Activated CD8-positive, alpha-beta T cell treated with anti-CD3 and anti-CD28 coated beads for 36 hours (primary cell): ENCODE measurements at regions of chr15 and their contacts with region 1.

Region 1: GRCh38 chr15:31488426-31489204 is 162.0 kb downstream of the KLF13 start:
- DNase-seq: peak; percentile 57
- ATAC-seq: peak; percentile 51
- H3K4me3 Mint-ChIP-seq: no peak overlapping the region
- H3K27ac Mint-ChIP-seq: peak overlapping the region; percentile 77
- H3K4me1 Mint-ChIP-seq: peaks cover 68% of the 10 kb centered on the region
- H3K27me3 Mint-ChIP-seq: no peaks in the 10 kb centered on the region
- CTCF ChIP-seq: peak; percentile 92

Region 2: DNA sequence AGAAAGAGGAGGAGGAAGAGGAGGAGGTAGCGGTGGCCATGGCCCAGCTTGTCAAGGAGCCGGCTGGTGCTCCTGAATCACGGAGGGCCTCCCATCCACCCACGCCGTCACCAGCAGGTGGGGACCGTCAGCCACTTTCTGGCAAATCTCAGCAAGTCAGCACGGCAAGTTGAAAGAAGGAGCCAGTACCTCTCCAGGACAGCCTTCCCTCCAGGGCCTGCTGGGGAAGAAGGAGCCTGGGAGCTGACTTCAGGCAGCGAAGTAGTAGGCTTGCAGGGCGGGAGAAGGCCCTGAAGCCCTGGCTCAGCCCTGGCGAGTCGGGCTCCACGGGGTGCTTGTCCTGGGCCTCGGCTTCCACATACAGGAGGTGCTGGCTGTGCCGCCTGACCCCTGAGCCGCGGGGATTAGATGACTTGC is 287.9 kb before region 1 on chr15:
- CTCF ChIA-PET with region 1: interaction called, 40 read pairs
- POLR2A ChIA-PET with region 1: no interaction called
- intact Hi-C with region 1: loop called (anchors 5 kb)
- DNase-seq: peak; percentile 80
- ATAC-seq: peak; percentile 73
- H3K4me3 Mint-ChIP-seq: no peak overlapping the region
- H3K27ac Mint-ChIP-seq: no peak overlapping the region
- H3K4me1 Mint-ChIP-seq: peaks cover 22% of the 10 kb centered on the region
- H3K27me3 Mint-ChIP-seq: no peaks in the 10 kb centered on the region
- CTCF ChIP-seq: no peak

Region 3: DNA sequence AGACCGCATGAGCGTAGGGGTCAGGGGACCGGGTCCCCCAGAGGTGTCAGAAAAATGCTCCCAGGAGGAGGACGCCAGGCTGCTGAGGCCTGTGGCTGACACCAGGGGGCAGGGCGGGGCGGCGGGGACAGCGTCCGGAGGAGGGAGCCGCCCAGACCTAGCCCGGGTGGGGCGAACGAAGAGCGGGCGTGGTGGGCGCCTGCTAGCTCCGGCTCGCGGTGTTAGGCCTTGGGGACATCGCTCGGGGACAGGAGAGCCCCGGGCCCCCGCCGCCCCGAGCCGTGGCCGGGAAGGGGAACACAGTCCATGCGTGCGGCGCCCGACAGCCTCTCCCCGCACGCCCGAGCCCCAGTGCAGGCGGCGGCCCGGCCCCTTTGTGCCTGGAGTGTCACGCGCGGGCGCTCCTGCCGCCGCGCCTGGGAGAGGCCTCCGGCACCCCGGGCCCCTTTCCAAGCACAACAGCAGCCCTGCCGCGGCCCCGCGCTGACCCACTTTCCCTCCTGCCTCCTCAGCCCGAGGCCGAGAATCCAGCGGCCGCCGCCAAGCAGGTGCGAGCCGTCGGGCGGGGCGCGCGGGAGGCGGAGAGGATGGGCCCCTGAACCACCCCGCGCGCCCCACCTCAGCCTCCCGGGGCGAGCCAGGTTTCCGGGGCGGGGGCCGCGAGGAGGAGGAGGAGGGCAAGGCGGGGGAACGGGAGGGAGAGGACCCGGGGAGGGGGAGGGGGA is 273.0 kb before region 1 on chr15:
- CTCF ChIA-PET with region 1: interaction called, 34 read pairs
- POLR2A ChIA-PET with region 1: interaction called, 3 read pairs
- intact Hi-C with region 1: no loop called
- DNase-seq: peak; percentile 86
- ATAC-seq: peak; percentile 92
- H3K4me3 Mint-ChIP-seq: peak overlapping the region; percentile 73
- H3K27ac Mint-ChIP-seq: peak overlapping the region; percentile 73
- H3K4me1 Mint-ChIP-seq: peaks cover 18% of the 10 kb centered on the region
- H3K27me3 Mint-ChIP-seq: no peaks in the 10 kb centered on the region
- CTCF ChIP-seq: peak; percentile 86

Region 4: DNA sequence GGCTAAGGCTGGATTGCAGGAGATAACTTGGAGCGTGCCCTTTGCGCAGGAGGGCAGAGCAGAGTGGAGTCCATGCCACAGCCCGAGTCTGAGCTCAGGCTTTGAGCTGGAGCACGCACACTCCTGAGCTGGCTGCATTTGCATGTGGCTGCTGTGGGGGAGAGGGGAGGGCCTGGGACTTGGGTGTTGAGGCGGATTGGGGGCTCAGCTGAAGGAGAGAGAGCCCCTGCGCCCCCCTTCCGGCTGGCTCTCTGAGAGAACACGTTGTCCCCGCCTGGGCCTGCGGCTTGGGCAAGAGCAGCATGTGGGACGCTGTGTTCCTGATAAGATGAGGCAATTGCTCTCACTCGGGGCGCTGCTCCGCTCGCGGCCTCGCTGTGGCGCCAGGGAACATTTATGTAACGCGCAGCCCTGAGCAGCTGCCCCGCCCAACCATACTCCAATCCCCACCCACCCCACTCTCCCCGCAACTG is 122.9 kb before region 1 on chr15:
- CTCF ChIA-PET with region 1: interaction called, 117 read pairs
- POLR2A ChIA-PET with region 1: interaction called, 9 read pairs
- intact Hi-C with region 1: loop called (anchors 5 kb)
- DNase-seq: peak; percentile 95
- ATAC-seq: peak; percentile 66
- H3K4me3 Mint-ChIP-seq: peak overlapping the region; percentile 78
- H3K27ac Mint-ChIP-seq: peak overlapping the region; percentile 99
- H3K4me1 Mint-ChIP-seq: peaks cover 100% of the 10 kb centered on the region
- H3K27me3 Mint-ChIP-seq: no peaks in the 10 kb centered on the region
- CTCF ChIP-seq: peak; percentile 58

Region 5: GRCh38 chr15:31402511-31403056 is 86.0 kb before region 1 on chr15:
- CTCF ChIA-PET with region 1: interaction called, 12 read pairs
- POLR2A ChIA-PET with region 1: no interaction called
- intact Hi-C with region 1: no loop called
- DNase-seq: no peak
- ATAC-seq: no peak
- H3K4me3 Mint-ChIP-seq: no peak overlapping the region
- H3K27ac Mint-ChIP-seq: no peak overlapping the region
- H3K4me1 Mint-ChIP-seq: peaks cover 61% of the 10 kb centered on the region
- H3K27me3 Mint-ChIP-seq: no peaks in the 10 kb centered on the region
- CTCF ChIP-seq: no peak

Region 6: DNA sequence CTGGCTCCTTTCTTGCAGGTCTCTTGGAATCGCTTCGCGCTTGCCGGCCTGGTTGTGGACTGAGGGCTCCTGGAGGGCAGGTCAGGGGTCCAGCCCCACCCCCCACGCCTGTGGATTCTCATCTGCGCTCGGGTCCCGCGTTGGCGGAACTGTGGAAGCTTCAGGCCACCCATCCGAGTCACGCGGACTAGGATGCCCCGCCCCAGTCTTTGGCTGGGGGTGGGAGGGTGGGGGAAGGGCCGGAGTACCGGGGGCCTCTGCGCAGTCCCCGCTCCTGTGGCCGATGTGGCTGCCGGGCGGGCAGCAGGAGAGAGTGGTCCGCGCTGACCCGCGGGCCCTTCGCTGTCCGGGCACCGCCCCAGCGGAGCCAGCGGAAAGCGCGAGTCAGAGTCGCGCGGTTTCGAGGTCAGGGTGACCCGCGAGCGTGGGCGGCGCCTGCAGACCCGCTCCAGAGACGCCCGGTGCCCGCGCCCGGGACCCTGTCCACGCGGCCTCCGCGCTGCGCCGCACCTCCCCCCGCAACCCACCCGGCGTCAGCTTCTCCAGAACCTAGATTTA is 47.8 kb before region 1 on chr15:
- CTCF ChIA-PET with region 1: interaction called, 265 read pairs
- POLR2A ChIA-PET with region 1: interaction called, 96 read pairs
- intact Hi-C with region 1: loop called (anchors 2 kb)
- DNase-seq: peak; percentile 61
- ATAC-seq: peak; percentile 8
- H3K4me3 Mint-ChIP-seq: peak overlapping the region; percentile 66
- H3K27ac Mint-ChIP-seq: peak overlapping the region; percentile 71
- H3K4me1 Mint-ChIP-seq: peaks cover 73% of the 10 kb centered on the region
- H3K27me3 Mint-ChIP-seq: no peaks in the 10 kb centered on the region
- CTCF ChIP-seq: no peak

Region 7: GRCh38 chr15:31472636-31473384 is 15.8 kb before region 1 on chr15:
- CTCF ChIA-PET with region 1: interaction called, 104 read pairs
- POLR2A ChIA-PET with region 1: interaction called, 29 read pairs
- intact Hi-C with region 1: no loop called
- DNase-seq: peak; percentile 76
- ATAC-seq: peak; percentile 87
- H3K4me3 Mint-ChIP-seq: peak overlapping the region; percentile 65
- H3K27ac Mint-ChIP-seq: peak overlapping the region; percentile 90
- H3K4me1 Mint-ChIP-seq: peaks cover 63% of the 10 kb centered on the region
- H3K27me3 Mint-ChIP-seq: no peaks in the 10 kb centered on the region
- CTCF ChIP-seq: no peak